Sigmoid colon (tissue), 7 donors: ENCODE measurements at regions of chr2 and their contacts with region 1.

Region 1: GRCh38 chr2:160493227-160494028 is at the start of gene RBMS1:
- DNase-seq: peak; percentile 83
- H3K4me3 ChIP-seq: peak within 1 kb of the TSS; percentile 81 to 98 (median 90)
- H3K27ac ChIP-seq: peak within 1 kb of the TSS; percentile 91 to 99 (median 95)
- H3K4me1 ChIP-seq: peaks cover 0 to 33% (median 16%) of the 10 kb centered on the region in 4 donors
- H3K27me3 ChIP-seq: no peaks in the 10 kb centered on the region
- CTCF ChIP-seq: no peak
- EP300 ChIP-seq: no peak
- POLR2A ChIP-seq: peak in 1 of 2 donors; percentile 15
- total RNA-seq, gene RBMS1: 69.2 to 91.8 (median 77.1) TPM

Region 2: GRCh38 chr2:160269803-160270570 is 223.4 kb before region 1 on chr2:
- intact Hi-C with region 1: loop called (anchors 2 kb)
- DNase-seq: peak; percentile 96
- H3K4me3 ChIP-seq: peak overlapping the region; percentile 37 to 55 (median 53)
- H3K27ac ChIP-seq: peak overlapping the region; percentile 90 to 97 (median 92)
- H3K4me1 ChIP-seq: peaks cover 0 to 38% (median 27%) of the 10 kb centered on the region in 4 donors
- H3K27me3 ChIP-seq: no peaks in the 10 kb centered on the region
- CTCF ChIP-seq: peak; percentile 61 to 75 (median 72)
- EP300 ChIP-seq: peak in 2 of 4 donors; percentile 13 to 63
- POLR2A ChIP-seq: peak in 1 of 2 donors; percentile 39

Region 3: GRCh38 chr2:160406591-160407392 is 86.6 kb before region 1 on chr2:
- intact Hi-C with region 1: loop called (anchors 2 kb)
- DNase-seq: peak; percentile 80
- H3K4me3 ChIP-seq: peak overlapping the region; percentile 76 to 100 (median 96)
- H3K27ac ChIP-seq: peak overlapping the region; percentile 95 to 99 (median 98)
- H3K4me1 ChIP-seq: peaks cover 0 to 74% (median 63%) of the 10 kb centered on the region in 4 donors
- H3K27me3 ChIP-seq: no peaks in the 10 kb centered on the region
- CTCF ChIP-seq: no peak
- EP300 ChIP-seq: no peak
- POLR2A ChIP-seq: peak; percentile 26 to 46

Region 4: DNA sequence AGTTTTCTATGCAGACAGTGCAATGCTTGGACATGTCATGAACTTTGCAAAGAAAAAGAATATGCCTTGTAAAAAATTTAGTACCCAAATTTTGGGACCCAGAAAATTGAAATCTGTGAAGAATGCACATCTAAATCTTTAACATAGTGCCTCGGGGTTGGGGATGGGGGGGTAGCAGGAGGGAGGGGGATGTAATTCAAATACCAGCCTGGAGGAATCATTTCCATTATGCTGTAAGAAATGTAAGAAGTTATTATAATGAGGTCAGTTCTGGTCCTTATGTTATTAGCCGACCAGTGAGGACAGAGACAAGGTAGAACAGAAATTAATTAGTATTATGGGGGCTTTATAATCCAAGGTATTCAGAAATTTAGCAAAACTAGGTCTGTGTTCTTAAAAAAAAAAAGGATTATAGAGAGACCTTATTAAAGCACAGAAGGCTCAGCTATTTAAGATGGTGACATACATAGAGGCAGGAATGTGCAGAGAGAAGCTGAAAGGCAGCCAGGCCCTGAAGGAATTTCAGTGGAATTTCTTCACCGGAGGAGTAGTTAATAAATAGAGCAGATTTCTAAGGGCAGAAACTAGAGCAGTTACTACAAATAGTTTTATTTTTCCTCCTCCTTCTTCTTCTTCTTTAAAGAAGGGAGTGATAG is 89.2 kb after region 1 on chr2:
- intact Hi-C with region 1: loop called (anchors 5 kb)
- DNase-seq: no peak
- H3K4me3 ChIP-seq: no peak overlapping the region
- H3K27ac ChIP-seq: peak overlapping the region; percentile 58 to 76 (median 70)
- H3K4me1 ChIP-seq: peaks cover 0 to 33% (median 27%) of the 10 kb centered on the region in 4 donors
- H3K27me3 ChIP-seq: no peaks in the 10 kb centered on the region
- CTCF ChIP-seq: no peak
- EP300 ChIP-seq: no peak
- POLR2A ChIP-seq: no peak

Region 5: DNA sequence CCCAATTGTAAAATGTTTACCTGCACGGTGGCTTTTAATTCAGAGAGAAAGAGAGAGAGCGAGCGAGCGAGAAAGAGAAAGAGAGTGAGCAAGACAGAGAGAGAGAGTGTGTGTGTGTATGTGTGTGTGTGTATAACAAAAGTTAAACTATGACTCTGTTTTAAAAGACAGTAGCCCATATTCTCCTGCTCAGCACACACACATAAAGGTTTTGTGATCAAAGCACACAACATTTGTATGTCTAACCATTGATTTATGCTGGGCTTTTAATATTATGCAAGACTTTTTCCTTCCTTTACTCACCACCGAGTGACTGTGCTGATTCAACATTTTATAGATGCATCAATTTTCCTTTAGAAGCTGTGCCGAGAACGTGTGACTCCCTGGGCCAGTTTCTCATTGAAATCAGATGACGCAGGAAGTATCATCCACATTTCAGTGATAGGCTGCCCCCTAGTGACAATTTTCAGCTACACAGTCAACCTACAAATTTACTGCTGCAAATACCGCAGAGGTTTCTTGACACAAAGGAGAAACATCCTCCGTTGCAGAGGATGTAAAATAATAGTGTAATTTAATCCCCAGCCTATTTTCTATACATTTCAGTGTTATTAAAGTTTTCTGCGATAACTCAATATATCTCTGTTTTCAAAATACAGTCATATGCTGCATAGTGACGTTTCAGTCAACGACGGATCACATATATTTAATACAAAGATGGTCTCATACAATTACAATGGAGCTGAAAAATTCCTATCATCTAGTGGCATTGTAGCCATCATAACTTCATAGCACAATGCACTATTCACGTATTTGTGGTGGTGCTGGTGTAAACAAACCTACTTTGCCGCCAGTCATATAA is 500.9 kb after region 1 on chr2:
- intact Hi-C with region 1: loop called (anchors 5 kb)
- DNase-seq: peak; percentile 93
- H3K4me3 ChIP-seq: peak overlapping the region in 3 of 4 donors; percentile 16 to 34 (median 23)
- H3K27ac ChIP-seq: peak overlapping the region in 3 of 4 donors; percentile 63 to 78 (median 69)
- H3K4me1 ChIP-seq: peaks cover 0 to 32% (median 8%) of the 10 kb centered on the region in 4 donors
- H3K27me3 ChIP-seq: no peaks in the 10 kb centered on the region
- CTCF ChIP-seq: peak; percentile 57 to 92 (median 81)
- EP300 ChIP-seq: peak in 3 of 4 donors; percentile 64 to 72 (median 68)
- POLR2A ChIP-seq: no peak

Region 6: GRCh38 chr2:161116509-161116908 is 623.1 kb after region 1 on chr2:
- intact Hi-C with region 1: no loop called
- DNase-seq: no peak
- H3K4me3 ChIP-seq: no peak overlapping the region
- H3K27ac ChIP-seq: no peak overlapping the region
- H3K4me1 ChIP-seq: no peaks in the 10 kb centered on the region
- H3K27me3 ChIP-seq: no peaks in the 10 kb centered on the region
- CTCF ChIP-seq: no peak
- EP300 ChIP-seq: no peak
- POLR2A ChIP-seq: no peak